ENCODE measurements at regions of chr16 and their contacts with region 1.

Region 1: DNA sequence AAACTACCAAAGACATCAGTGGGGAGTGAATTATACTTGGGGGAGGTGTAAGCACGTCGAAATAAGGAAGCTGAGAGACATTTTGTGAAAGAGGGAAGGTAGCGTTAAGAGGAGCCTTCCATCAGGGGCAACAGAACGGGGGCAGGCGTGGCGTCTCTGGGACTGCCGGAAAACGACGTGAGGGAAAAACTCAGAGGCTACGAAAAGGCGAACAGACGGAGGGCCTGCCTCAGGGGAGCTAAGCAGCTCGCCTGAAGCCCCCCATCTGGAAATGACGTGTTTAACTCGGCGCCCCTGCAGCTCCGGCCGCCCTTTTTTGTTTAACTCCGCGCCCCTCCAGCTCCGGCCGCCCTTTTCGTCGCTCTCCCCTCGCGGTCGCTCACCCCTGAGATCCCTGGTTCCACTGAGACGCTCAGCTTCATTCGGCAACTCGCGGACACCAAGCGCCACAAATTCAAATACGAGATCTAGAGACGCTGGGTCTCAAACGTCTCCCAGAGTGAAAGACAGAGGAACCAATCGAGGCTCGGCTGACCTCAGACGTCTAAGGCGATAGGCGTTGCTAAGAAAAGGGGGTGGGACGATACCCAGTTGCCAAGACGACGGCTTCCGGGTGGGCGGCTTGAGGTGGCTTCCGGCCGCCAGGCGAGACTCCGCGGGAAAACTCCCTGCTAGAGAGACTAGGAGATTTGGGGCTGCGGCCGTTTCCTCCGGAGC is 383.3 kb downstream of the ZFHX3 start:
- DNase-seq: peak; percentile 91
- H3K4me3 Mint-ChIP-seq: peak overlapping the region; percentile 99
- H3K27ac Mint-ChIP-seq: peak overlapping the region; percentile 96
- H3K4me1 Mint-ChIP-seq: peaks cover 38% of the 10 kb centered on the region
- H3K27me3 Mint-ChIP-seq: peaks cover 3% of the 10 kb centered on the region

Region 2: GRCh38 chr16:71461686-71462648 is 1202.7 kb before region 1 on chr16 and contains the start of gene ZNF23:
- intact Hi-C with region 1: loop called (anchors 10 kb)
- DNase-seq: peak; percentile 71
- H3K4me3 Mint-ChIP-seq: peak within 1 kb of the TSS; percentile 86
- H3K27ac Mint-ChIP-seq: peak within 1 kb of the TSS; percentile 86
- H3K4me1 Mint-ChIP-seq: peaks cover 13% of the 10 kb centered on the region
- H3K27me3 Mint-ChIP-seq: peaks cover 1% of the 10 kb centered on the region
- total RNA-seq, gene ZNF23: 4.9 and 6.4 TPM in 2 replicates

Region 3: DNA sequence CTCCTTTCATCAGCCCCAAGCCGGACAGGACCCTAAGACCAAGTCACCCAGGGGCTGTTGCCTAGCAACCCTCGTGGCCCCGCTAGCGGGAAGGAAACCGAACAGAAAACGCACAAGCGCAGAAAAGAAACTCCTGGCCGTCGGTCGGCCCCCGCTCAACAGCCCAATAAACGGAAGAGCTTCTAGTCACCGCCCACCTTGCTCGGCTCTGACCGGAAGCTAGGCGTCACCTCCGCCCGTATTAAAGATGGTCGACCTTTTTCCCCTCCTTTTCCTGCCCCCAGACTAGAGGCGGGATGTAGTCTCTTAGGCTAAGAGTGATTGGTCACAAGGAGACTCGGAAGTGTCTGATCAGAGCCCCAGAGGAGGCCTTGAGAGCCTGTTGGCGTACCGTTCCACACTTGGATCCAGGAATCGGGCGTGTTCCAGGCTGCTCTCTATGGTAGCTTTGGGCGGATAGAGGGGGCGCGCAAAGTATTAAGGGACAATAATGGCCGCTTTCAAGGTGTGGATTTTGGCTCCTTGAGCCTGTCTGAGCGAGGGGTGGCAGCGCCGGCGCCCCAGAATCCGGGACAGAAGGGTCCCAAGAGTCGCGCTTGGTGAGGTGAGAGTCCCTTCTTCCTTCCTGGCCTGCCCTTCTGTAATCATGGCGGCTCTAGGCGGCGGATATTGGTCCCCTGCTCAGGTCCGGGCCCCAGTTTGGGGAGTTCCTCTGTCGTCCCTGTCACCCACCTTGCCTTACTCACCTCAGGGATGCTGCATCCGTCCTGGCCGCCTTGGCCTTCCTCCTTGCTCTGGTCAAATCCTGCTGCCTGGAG is 571.0 kb before region 1 on chr16 and contains the starts of genes DHX38 and TXNL4B:
- intact Hi-C with region 1: loop called (anchors 1 kb)
- DNase-seq: peak; percentile 92
- H3K4me3 Mint-ChIP-seq: peak within 1 kb of the TSS; percentile 99
- H3K27ac Mint-ChIP-seq: peak within 1 kb of the TSS; percentile 99
- H3K4me1 Mint-ChIP-seq: peaks cover 64% of the 10 kb centered on the region
- H3K27me3 Mint-ChIP-seq: no peaks in the 10 kb centered on the region
- total RNA-seq, gene DHX38: 89.8 and 99.4 TPM in 2 replicates
- total RNA-seq, gene TXNL4B: 24.0 and 25.1 TPM in 2 replicates

Region 4: GRCh38 chr16:72787514-72788268 is 123.0 kb after region 1 on chr16:
- intact Hi-C with region 1: loop called (anchors 1 kb)
- DNase-seq: peak; percentile 55
- H3K4me3 Mint-ChIP-seq: peak overlapping the region; percentile 84
- H3K27ac Mint-ChIP-seq: peak overlapping the region; percentile 68
- H3K4me1 Mint-ChIP-seq: peaks cover 23% of the 10 kb centered on the region
- H3K27me3 Mint-ChIP-seq: peaks cover 34% of the 10 kb centered on the region

Region 5: DNA sequence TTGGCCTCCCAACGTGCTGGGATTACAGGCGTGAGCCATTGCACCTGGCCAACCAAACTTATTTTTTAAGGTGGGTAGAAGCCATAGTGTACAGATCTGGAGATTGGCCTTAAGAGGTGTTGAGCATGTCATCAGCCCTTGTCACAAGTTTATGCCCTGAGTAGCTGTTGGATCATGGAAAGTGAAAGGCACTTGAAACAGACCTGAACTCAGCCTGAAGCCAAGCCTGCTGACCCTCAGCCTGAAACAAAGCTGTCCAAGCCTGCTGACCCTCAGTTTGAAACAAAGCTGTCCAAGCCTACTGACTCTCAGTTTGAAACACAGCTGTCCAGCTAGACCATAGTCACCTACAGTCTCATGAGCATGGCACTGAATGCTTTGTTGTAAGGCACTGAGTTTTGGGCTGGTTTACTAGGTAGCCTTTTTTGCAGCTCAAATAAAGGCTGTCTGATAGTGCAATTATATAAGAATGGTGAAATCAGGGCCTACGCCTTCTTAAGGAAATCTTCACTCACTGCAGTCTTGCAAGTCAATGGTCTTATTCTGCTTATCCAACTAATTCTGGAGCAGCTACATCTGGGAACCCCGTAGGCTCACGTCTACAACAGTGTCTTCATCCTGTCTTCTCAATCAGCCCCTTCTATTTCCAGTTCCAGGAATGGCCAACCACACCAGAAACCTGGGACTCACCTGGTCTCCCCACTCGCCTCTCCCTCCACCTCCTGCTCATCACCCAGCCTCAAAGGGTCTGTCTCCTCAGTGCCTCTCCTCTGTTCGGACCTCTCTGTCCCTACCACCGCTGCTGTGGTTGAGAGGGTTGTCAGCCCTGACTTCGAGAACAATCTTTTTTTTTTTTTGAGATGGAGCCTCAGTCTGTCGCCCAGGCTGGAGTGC is 1708.5 kb after region 1 on chr16:
- intact Hi-C with region 1: loop called (anchors 5 kb)
- DNase-seq: no peak
- H3K4me3 Mint-ChIP-seq: no peak overlapping the region
- H3K27ac Mint-ChIP-seq: no peak overlapping the region
- H3K4me1 Mint-ChIP-seq: peaks cover 6% of the 10 kb centered on the region
- H3K27me3 Mint-ChIP-seq: no peaks in the 10 kb centered on the region